A549 (cell line): ENCODE measurements at regions of chrX and their contacts with region 1.

Region 1: GRCh38 chrX:19372170-19372546 is 28.4 kb downstream of the PDHA1 start:
- DNase-seq: peak; percentile 61 to 67
- ATAC-seq: peak; percentile 87
- H3K4me3 ChIP-seq: no peak overlapping the region
- H3K27ac ChIP-seq: 0 out of 6 replicates have a peak overlapping the region, but pooled peaks of 1 of the 2 experiments have one; percentile 39
- H3K4me1 ChIP-seq: no peaks in the 10 kb centered on the region
- CTCF ChIP-seq: peak; percentile 72
- EP300 ChIP-seq: no peak
- POLR2A ChIP-seq: no peak
- RAD21 ChIP-seq: peak; percentile 80 to 87

Region 2: GRCh38 chrX:19272452-19272851 is 99.7 kb before region 1 on chrX:
- CTCF ChIA-PET with region 1: no interaction called
- POLR2A ChIA-PET with region 1: no interaction called
- DNase-seq: no peak
- ATAC-seq: no peak
- H3K4me3 ChIP-seq: no peak overlapping the region
- H3K27ac ChIP-seq: no peak overlapping the region
- H3K4me1 ChIP-seq: no peaks in the 10 kb centered on the region
- CTCF ChIP-seq: no peak
- EP300 ChIP-seq: no peak
- POLR2A ChIP-seq: no peak
- RAD21 ChIP-seq: no peak

Region 3: GRCh38 chrX:19358526-19358925 is 13.6 kb before region 1 on chrX:
- CTCF ChIA-PET with region 1: interaction called, 13 read pairs
- POLR2A ChIA-PET with region 1: no interaction called
- DNase-seq: no peak
- ATAC-seq: no peak
- H3K4me3 ChIP-seq: no peak overlapping the region
- H3K27ac ChIP-seq: no peak overlapping the region
- H3K4me1 ChIP-seq: no peaks in the 10 kb centered on the region
- CTCF ChIP-seq: no peak
- EP300 ChIP-seq: no peak
- POLR2A ChIP-seq: no peak
- RAD21 ChIP-seq: no peak

Region 4: DNA sequence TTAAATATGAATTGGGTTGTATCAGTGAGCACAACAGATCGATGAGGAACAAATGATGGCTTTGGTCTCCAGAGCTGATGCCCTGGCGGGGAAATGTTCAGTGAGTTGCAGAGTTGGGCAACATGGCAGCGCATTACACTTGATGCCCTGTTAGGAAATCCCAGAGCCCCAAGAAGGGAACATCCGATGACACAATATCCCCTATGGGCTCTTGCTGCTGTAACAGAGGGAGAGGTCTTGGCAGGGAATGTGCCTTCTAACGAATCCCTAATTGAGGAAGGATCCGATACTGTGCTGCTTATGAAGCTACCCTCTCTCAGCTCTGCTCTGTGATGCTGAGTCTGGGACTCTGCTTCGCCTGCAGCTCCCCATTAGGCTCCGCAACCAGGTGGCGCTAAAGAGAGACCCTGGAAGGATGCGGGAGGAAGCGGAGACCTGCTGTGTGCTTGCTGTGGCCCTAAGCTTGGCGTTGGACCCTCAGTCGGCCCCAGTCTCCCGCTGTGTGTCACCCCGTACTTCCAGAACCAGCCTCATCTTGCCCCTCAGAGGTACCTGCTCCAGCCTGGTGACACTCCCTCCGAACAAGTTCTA is 10.5 kb after region 1 on chrX:
- CTCF ChIA-PET with region 1: interaction called, 21 read pairs
- POLR2A ChIA-PET with region 1: no interaction called
- DNase-seq: peak; percentile 55 to 59
- ATAC-seq: peak; percentile 97 to 99
- H3K4me3 ChIP-seq: no peak overlapping the region
- H3K27ac ChIP-seq: no peak overlapping the region
- H3K4me1 ChIP-seq: no peaks in the 10 kb centered on the region
- CTCF ChIP-seq: peak; percentile 54
- EP300 ChIP-seq: no peak
- POLR2A ChIP-seq: no peak
- RAD21 ChIP-seq: peak; percentile 45 to 59; a peak in 4 of 5 replicates

Region 5: GRCh38 chrX:19535476-19535875 is 163.3 kb after region 1 on chrX:
- CTCF ChIA-PET with region 1: interaction called, 11 read pairs
- POLR2A ChIA-PET with region 1: no interaction called
- DNase-seq: peak; percentile 42 to 54
- ATAC-seq: peak; percentile 77; a peak in 5 of 6 replicates
- H3K4me3 ChIP-seq: no peak overlapping the region
- H3K27ac ChIP-seq: no peak overlapping the region
- H3K4me1 ChIP-seq: no peaks in the 10 kb centered on the region
- CTCF ChIP-seq: peak; percentile 48
- EP300 ChIP-seq: no peak
- POLR2A ChIP-seq: no peak
- RAD21 ChIP-seq: peak; percentile 46 to 60; a peak in 3 of 5 replicates